ENCODE measurements at regions of chr9 and their contacts with region 1.

Region 1: DNA sequence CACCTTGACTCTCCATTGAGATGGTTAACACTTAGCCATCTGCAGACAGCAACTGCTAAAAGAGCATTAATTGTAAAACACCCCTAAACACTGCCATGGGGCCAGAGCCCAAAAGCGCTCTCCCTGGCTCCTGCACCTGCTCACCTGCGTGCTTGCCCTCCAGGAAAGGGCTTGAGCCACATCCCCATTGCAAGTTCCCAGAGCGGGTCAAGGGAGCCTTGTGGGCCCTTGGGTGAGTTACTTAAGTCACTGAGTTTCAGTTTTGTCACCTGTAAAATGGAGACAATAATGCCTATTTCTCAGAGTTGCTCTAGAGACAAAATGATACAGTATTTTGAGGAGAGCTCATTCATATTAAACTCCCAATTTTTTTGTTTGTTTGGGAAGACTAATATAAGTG is 967.8 kb downstream of the PTPRD start:
- DNase-seq: no peak
- H3K4me3 ChIP-seq: no peak overlapping the region
- H3K27ac ChIP-seq: no peak overlapping the region
- H3K4me1 ChIP-seq: no peaks in the 10 kb centered on the region
- CTCF ChIP-seq: no peak

Region 2: GRCh38 chr9:9631284-9631683 is 13.7 kb before region 1 on chr9:
- CTCF ChIA-PET with region 1: no interaction called
- POLR2A ChIA-PET with region 1: interaction called, 11 read pairs
- intact Hi-C with region 1: no loop called
- DNase-seq: no peak
- H3K4me3 ChIP-seq: no peak overlapping the region
- H3K27ac ChIP-seq: no peak overlapping the region
- H3K4me1 ChIP-seq: peaks cover 27% of the 10 kb centered on the region
- CTCF ChIP-seq: no peak

Region 3: GRCh38 chr9:9778293-9778692 is 133.3 kb after region 1 on chr9:
- CTCF ChIA-PET with region 1: no interaction called
- POLR2A ChIA-PET with region 1: no interaction called
- intact Hi-C with region 1: no loop called
- DNase-seq: no peak
- H3K4me3 ChIP-seq: no peak overlapping the region
- H3K27ac ChIP-seq: no peak overlapping the region
- H3K4me1 ChIP-seq: no peaks in the 10 kb centered on the region
- CTCF ChIP-seq: no peak